ENCODE measurements at regions of chr3 and their contacts with region 1.

Region 1: DNA sequence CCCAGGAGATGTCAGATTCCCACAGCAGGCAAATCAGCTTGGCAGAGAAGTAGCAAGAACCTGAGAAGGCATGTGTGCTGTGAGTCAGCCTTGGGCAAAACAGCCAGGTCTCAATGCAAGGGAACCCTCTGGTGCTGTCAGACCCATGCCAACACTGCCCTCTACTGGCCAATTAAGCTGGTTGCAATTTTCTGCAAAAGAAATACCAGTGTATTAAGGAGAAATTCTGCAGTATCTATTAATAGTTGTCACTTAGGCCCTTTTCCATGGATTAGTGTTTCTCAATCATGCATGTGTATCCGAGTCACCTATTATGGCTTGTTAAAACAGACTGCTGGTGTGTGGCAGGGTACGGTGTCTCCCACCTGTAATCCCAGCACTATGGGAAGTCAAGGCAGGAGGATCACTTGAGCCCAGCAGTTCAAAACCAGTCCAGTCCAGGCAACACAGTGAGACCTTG is 26.2 kb downstream of the MAP4 start:
- DNase-seq: peak; percentile 79
- H3K4me3 Mint-ChIP-seq: no peak overlapping the region
- H3K27ac Mint-ChIP-seq: no peak overlapping the region
- H3K4me1 Mint-ChIP-seq: peaks cover 6% of the 10 kb centered on the region
- H3K27me3 Mint-ChIP-seq: no peaks in the 10 kb centered on the region

Region 2: GRCh38 chr3:47836986-47837385 is 153.0 kb before region 1 on chr3:
- CTCF ChIA-PET with region 1: interaction called, 38 read pairs
- POLR2A ChIA-PET with region 1: no interaction called
- intact Hi-C with region 1: no loop called
- DNase-seq: no peak
- H3K4me3 Mint-ChIP-seq: no peak overlapping the region
- H3K27ac Mint-ChIP-seq: no peak overlapping the region
- H3K4me1 Mint-ChIP-seq: no peaks in the 10 kb centered on the region
- H3K27me3 Mint-ChIP-seq: no peaks in the 10 kb centered on the region

Region 3: GRCh38 chr3:48001991-48002390 is 12.0 kb after region 1 on chr3:
- CTCF ChIA-PET with region 1: interaction called, 14 read pairs
- POLR2A ChIA-PET with region 1: no interaction called
- intact Hi-C with region 1: no loop called
- DNase-seq: no peak
- H3K4me3 Mint-ChIP-seq: no peak overlapping the region
- H3K27ac Mint-ChIP-seq: no peak overlapping the region
- H3K4me1 Mint-ChIP-seq: peaks cover under 1% of the 10 kb centered on the region
- H3K27me3 Mint-ChIP-seq: no peaks in the 10 kb centered on the region

Region 4: GRCh38 chr3:48151058-48151806 is 161.2 kb after region 1 on chr3:
- CTCF ChIA-PET with region 1: interaction called, 17 read pairs
- POLR2A ChIA-PET with region 1: no interaction called
- intact Hi-C with region 1: loop called (anchors 10 kb)
- DNase-seq: peak; percentile 80
- H3K4me3 Mint-ChIP-seq: no peak overlapping the region
- H3K27ac Mint-ChIP-seq: no peak overlapping the region
- H3K4me1 Mint-ChIP-seq: no peaks in the 10 kb centered on the region
- H3K27me3 Mint-ChIP-seq: no peaks in the 10 kb centered on the region

Region 5: GRCh38 chr3:48918388-48919214 is 928.6 kb after region 1 on chr3 and contains the start of gene ARIH2:
- CTCF ChIA-PET with region 1: no interaction called
- POLR2A ChIA-PET with region 1: no interaction called
- intact Hi-C with region 1: no loop called
- DNase-seq: peak; percentile 94
- H3K4me3 Mint-ChIP-seq: peak within 1 kb of the TSS; percentile 98
- H3K27ac Mint-ChIP-seq: peak within 1 kb of the TSS; percentile 100
- H3K4me1 Mint-ChIP-seq: peaks cover 31% of the 10 kb centered on the region
- H3K27me3 Mint-ChIP-seq: no peaks in the 10 kb centered on the region
- total RNA-seq, gene ARIH2: 109 to 130 TPM

Measured in activated CD4-positive, alpha-beta memory T cell treated with anti-CD3 and anti-CD28 coated beads for 36 hours (primary cell).